ENCODE measurements at regions of chr5 and their contacts with region 1.

Region 1: GRCh38 chr5:141320225-141321169 is at the start of gene TAF7:
- DNase-seq: peak; percentile 88 to 94 (median 94)
- ATAC-seq: peak; percentile 94
- H3K4me3 ChIP-seq: peak within 1 kb of the TSS; percentile 95
- H3K4me3 Mint-ChIP-seq: peak within 1 kb of the TSS; percentile 90 to 100 (median 98)
- H3K27ac ChIP-seq: peak within 1 kb of the TSS; percentile 88
- H3K27ac Mint-ChIP-seq: peak within 1 kb of the TSS; percentile 97 to 100 (median 99)
- H3K4me1 ChIP-seq: peaks cover 7% of the 10 kb centered on the region in 2 donors
- H3K4me1 Mint-ChIP-seq: peaks cover 18 to 40% (median 27%) of the 10 kb centered on the region in 7 donors
- H3K27me3 ChIP-seq: no peaks in the 10 kb centered on the region
- H3K27me3 Mint-ChIP-seq: peaks cover 0 to 3% (median 0%) of the 10 kb centered on the region in 5 donors
- total RNA-seq, gene TAF7: 64.5 to 115 (median 84.9) TPM

Region 2: GRCh38 chr5:140700177-140701144 is 620.0 kb before region 1 on chr5 and contains the start of gene ZMAT2:
- CTCF ChIA-PET with region 1: no interaction called
- POLR2A ChIA-PET with region 1: interaction called, 4 read pairs
- intact Hi-C with region 1: loop called in 1 of 2 experiments (anchors 2 kb)
- DNase-seq: peak; percentile 74 to 97 (median 92)
- ATAC-seq: peak; percentile 100
- H3K4me3 ChIP-seq: peak within 1 kb of the TSS; percentile 78
- H3K4me3 Mint-ChIP-seq: peak within 1 kb of the TSS; percentile 93 to 100 (median 98)
- H3K27ac ChIP-seq: peak within 1 kb of the TSS; percentile 87
- H3K27ac Mint-ChIP-seq: peak within 1 kb of the TSS; percentile 90 to 99 (median 97)
- H3K4me1 ChIP-seq: peaks cover 4 to 14% of the 10 kb centered on the region in 2 donors
- H3K4me1 Mint-ChIP-seq: peaks cover 18 to 35% (median 29%) of the 10 kb centered on the region in 7 donors
- H3K27me3 ChIP-seq: no peaks in the 10 kb centered on the region
- H3K27me3 Mint-ChIP-seq: no peaks in the 10 kb centered on the region
- total RNA-seq, gene ZMAT2: 37.7 to 63.0 (median 55.1) TPM

Region 3: GRCh38 chr5:141402553-141403260 is 82.2 kb after region 1 on chr5 and contains the start of gene PCDHGA9:
- CTCF ChIA-PET with region 1: no interaction called
- POLR2A ChIA-PET with region 1: no interaction called
- intact Hi-C with region 1: no loop called
- DNase-seq: no peak
- ATAC-seq: no peak
- H3K4me3 ChIP-seq: no peak within 1 kb of the TSS
- H3K4me3 Mint-ChIP-seq: peak within 1 kb of the TSS in 9 of 10 donors; percentile 28 to 76 (median 68)
- H3K27ac ChIP-seq: no peak within 1 kb of the TSS
- H3K27ac Mint-ChIP-seq: peak within 1 kb of the TSS in 3 of 9 donors; percentile 8 to 49 (median 49)
- H3K4me1 ChIP-seq: no peaks in the 10 kb centered on the region
- H3K4me1 Mint-ChIP-seq: peaks cover 0 to 11% (median 4%) of the 10 kb centered on the region in 7 donors
- H3K27me3 ChIP-seq: peaks cover 7 to 26% of the 10 kb centered on the region in 2 donors
- H3K27me3 Mint-ChIP-seq: peaks cover 50 to 82% (median 74%) of the 10 kb centered on the region in 5 donors
- total RNA-seq, gene PCDHGA9: 0.16 to 0.41 (median 0.22) TPM in 4 of 5 experiments, not detected in the other

Region 4: GRCh38 chr5:141412854-141413539 is 92.5 kb after region 1 on chr5 and contains the start of gene PCDHGA10:
- CTCF ChIA-PET with region 1: no interaction called
- POLR2A ChIA-PET with region 1: interaction called, 4 read pairs
- intact Hi-C with region 1: loop called (anchors 2 to 5 kb)
- DNase-seq: peak in 7 of 9 donors; percentile 38 to 66 (median 52)
- ATAC-seq: peak; percentile 84
- H3K4me3 ChIP-seq: peak within 1 kb of the TSS; percentile 73
- H3K4me3 Mint-ChIP-seq: peak within 1 kb of the TSS; percentile 83 to 92 (median 87)
- H3K27ac ChIP-seq: no peak within 1 kb of the TSS
- H3K27ac Mint-ChIP-seq: peak within 1 kb of the TSS in 2 of 9 donors; percentile 54 to 56
- H3K4me1 ChIP-seq: peaks cover 0 to 5% of the 10 kb centered on the region in 2 donors
- H3K4me1 Mint-ChIP-seq: peaks cover 13 to 27% (median 19%) of the 10 kb centered on the region in 7 donors
- H3K27me3 ChIP-seq: peaks cover 23% of the 10 kb centered on the region in 2 donors
- H3K27me3 Mint-ChIP-seq: peaks cover 69 to 80% (median 75%) of the 10 kb centered on the region in 5 donors
- total RNA-seq, gene PCDHGA10: 0.11 to 0.39 (median 0.24) TPM

Region 5: GRCh38 chr5:141564216-141564692 is 243.8 kb after region 1 on chr5:
- CTCF ChIA-PET with region 1: interaction called, 13 read pairs
- POLR2A ChIA-PET with region 1: interaction called, 26 read pairs
- intact Hi-C with region 1: loop called (anchors 1 to 2 kb)
- DNase-seq: peak; percentile 17 to 89 (median 80)
- ATAC-seq: peak; percentile 100
- H3K4me3 ChIP-seq: no peak overlapping the region
- H3K4me3 Mint-ChIP-seq: peak overlapping the region in 1 of 10 donors; percentile 8
- H3K27ac ChIP-seq: peak overlapping the region; percentile 43
- H3K27ac Mint-ChIP-seq: peak overlapping the region; percentile 41 to 93 (median 72)
- H3K4me1 ChIP-seq: peaks cover 0 to 8% of the 10 kb centered on the region in 2 donors
- H3K4me1 Mint-ChIP-seq: peaks cover 13 to 51% (median 38%) of the 10 kb centered on the region in 7 donors
- H3K27me3 ChIP-seq: no peaks in the 10 kb centered on the region
- H3K27me3 Mint-ChIP-seq: no peaks in the 10 kb centered on the region

Region 6: GRCh38 chr5:141923448-141924352 is 603.2 kb after region 1 on chr5 and contains the start of gene DELE1:
- CTCF ChIA-PET with region 1: no interaction called
- POLR2A ChIA-PET with region 1: interaction called, 4 read pairs
- intact Hi-C with region 1: loop called in 1 of 2 experiments (anchors 2 kb)
- DNase-seq: peak; percentile 79 to 92 (median 90)
- ATAC-seq: peak; percentile 97
- H3K4me3 ChIP-seq: peak within 1 kb of the TSS; percentile 81
- H3K4me3 Mint-ChIP-seq: peak within 1 kb of the TSS; percentile 88 to 98 (median 94)
- H3K27ac ChIP-seq: peak within 1 kb of the TSS; percentile 98
- H3K27ac Mint-ChIP-seq: peak within 1 kb of the TSS; percentile 87 to 99 (median 98)
- H3K4me1 ChIP-seq: peaks cover 10 to 14% of the 10 kb centered on the region in 2 donors
- H3K4me1 Mint-ChIP-seq: peaks cover 23 to 54% (median 36%) of the 10 kb centered on the region in 7 donors
- H3K27me3 ChIP-seq: no peaks in the 10 kb centered on the region
- H3K27me3 Mint-ChIP-seq: no peaks in the 10 kb centered on the region
- total RNA-seq, gene DELE1: 77.3 to 101 (median 88.2) TPM

Region 7: DNA sequence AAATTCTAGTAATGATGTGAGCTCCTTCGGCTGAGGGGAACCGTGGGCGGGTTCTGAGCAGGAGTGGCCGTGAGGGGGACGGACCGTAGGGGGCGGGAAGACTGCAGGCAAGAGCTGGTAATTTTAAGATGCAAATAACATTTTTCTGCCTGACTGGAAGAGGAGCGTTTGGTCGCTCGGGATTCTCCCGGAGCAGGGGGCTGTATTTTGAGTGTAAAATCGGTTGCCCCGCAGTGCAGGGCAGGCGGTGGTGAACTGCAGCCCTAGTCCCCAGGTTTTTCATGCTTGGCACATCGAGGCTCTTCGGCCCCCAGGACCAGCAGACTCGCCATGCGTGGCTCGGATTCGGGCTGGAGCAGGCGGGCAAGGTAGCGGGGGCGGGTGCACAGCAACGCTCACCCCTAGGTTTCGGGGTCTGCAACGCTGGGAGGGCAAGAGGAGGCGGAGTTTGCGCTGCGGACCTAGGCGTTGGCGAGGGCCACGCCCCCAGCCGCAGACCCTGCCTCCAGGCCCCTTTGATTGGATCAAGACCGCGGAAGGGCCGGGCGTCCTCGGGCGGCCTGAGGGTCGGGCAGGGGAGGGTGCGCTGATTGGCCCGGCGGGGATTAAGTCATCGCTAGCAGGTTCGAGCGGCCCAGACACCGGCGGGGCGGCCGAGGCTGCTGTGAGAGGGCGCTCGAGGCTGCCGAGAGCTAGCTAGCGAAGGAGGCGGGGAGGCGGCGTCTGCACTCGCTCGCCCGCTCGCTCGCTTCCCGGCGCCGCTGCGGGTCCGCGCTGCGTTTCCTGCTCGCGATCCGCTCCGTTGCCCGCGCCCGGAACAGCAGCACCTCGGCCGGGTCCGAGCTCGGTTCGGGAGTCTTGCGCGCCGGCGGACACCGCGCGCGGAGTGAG is 1449.5 kb after region 1 on chr5 and contains the start of gene ARHGAP26:
- CTCF ChIA-PET with region 1: no interaction called
- POLR2A ChIA-PET with region 1: no interaction called
- intact Hi-C with region 1: loop called in 1 of 2 experiments (anchors 2 kb)
- DNase-seq: peak; percentile 82 to 93 (median 87)
- ATAC-seq: peak; percentile 94
- H3K4me3 ChIP-seq: peak within 1 kb of the TSS; percentile 86
- H3K4me3 Mint-ChIP-seq: peak within 1 kb of the TSS; percentile 87 to 100 (median 96)
- H3K27ac ChIP-seq: peak within 1 kb of the TSS; percentile 77
- H3K27ac Mint-ChIP-seq: peak within 1 kb of the TSS; percentile 89 to 98 (median 92)
- H3K4me1 ChIP-seq: peaks cover 9 to 15% of the 10 kb centered on the region in 2 donors
- H3K4me1 Mint-ChIP-seq: peaks cover 30 to 39% (median 35%) of the 10 kb centered on the region in 7 donors
- H3K27me3 ChIP-seq: no peaks in the 10 kb centered on the region
- H3K27me3 Mint-ChIP-seq: peaks cover 0 to 3% (median 0%) of the 10 kb centered on the region in 5 donors
- total RNA-seq, gene ARHGAP26: 20.1 to 123 (median 29.1) TPM

Measured in naive thymus-derived CD4-positive, alpha-beta T cell (primary cell).